ENCODE measurements at regions of chr15 and their contacts with region 1.

Region 1: GRCh38 chr15:77543159-77543882 is 89.4 kb downstream of the LINGO1 start:
- DNase-seq: peak; percentile 24
- H3K4me3 ChIP-seq: peak overlapping the region; percentile 57
- CTCF ChIP-seq: peak; percentile 86

Region 2: GRCh38 chr15:77034695-77035489 is 508.4 kb before region 1 on chr15:
- CTCF ChIA-PET with region 1: interaction called, 32 read pairs
- POLR2A ChIA-PET with region 1: no interaction called
- DNase-seq: no peak
- H3K4me3 ChIP-seq: no peak overlapping the region
- CTCF ChIP-seq: peak; percentile 69

Region 3: DNA sequence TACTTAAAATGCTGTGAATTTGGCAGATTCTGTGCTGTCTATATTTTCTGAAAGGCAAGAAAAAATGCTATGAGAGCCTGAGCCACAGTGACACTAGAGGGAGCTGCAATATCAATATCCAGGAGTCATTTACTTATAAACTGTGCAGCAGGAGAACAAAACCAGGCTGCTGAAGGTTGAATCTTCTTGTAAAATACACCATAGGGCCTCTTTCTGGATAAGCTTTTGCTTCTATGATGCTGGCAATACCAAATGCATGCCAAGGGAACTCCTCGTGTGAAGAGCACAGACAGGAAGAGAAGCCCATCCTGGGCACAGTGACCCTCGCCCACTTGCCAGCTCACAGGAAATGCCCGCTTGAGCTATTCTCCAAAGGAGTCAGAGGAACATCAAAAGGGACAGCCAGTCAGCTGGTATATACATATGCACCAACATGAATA is 424.4 kb before region 1 on chr15:
- CTCF ChIA-PET with region 1: interaction called, 137 read pairs
- POLR2A ChIA-PET with region 1: no interaction called
- DNase-seq: no peak
- H3K4me3 ChIP-seq: no peak overlapping the region
- CTCF ChIP-seq: peak; percentile 56

Region 4: DNA sequence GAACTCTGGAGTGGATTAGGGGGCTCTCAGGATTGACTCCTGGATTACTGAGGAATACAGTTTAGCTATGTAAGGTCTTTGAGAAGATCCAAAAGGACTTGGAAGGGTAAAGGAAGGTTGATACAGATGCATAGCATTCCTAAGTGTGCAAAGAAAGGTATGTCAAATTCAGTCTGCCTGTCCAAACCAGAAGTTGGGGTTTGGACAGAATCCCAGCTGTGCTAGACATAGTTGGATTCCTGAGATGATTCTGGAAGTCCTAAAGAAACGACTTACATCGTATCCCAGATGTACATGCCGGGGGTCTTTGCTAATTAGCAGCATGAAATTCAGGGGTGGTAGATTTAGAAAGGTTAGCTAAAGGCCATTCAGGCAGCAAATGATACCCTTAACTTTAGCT is 374.7 kb before region 1 on chr15:
- CTCF ChIA-PET with region 1: interaction called, 35 read pairs
- POLR2A ChIA-PET with region 1: interaction called, 3 read pairs
- DNase-seq: peak; percentile 42
- H3K4me3 ChIP-seq: no peak overlapping the region
- CTCF ChIP-seq: no peak

Region 5: DNA sequence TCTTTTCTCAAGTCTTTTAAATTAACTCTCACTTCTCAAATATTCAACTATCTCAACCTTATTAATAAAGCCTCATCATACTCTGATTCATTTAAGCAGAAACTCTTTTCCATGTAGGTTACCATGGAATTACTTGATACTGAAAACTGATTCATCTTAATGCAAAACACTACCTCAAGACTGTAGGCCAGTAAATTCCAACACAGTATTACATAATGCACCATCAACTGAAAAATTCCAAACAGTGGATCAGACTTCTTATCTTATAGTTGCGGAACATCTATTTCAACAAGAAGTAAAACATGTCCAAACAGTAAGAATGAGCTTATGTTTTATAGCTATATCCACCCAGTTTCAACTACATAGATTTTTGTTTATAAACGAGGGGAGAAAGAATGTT is 247.9 kb before region 1 on chr15:
- CTCF ChIA-PET with region 1: interaction called, 13 read pairs
- POLR2A ChIA-PET with region 1: no interaction called
- DNase-seq: peak; percentile 24
- H3K4me3 ChIP-seq: no peak overlapping the region
- CTCF ChIP-seq: no peak

Region 6: GRCh38 chr15:77507911-77508310 is 35.4 kb before region 1 on chr15:
- CTCF ChIA-PET with region 1: interaction called, 11 read pairs
- POLR2A ChIA-PET with region 1: interaction called, 3 read pairs
- DNase-seq: no peak
- H3K4me3 ChIP-seq: no peak overlapping the region
- CTCF ChIP-seq: no peak